ENCODE measurements at regions of chr1 and their contacts with region 1.

Region 1: GRCh38 chr1:160284782-160285344 is at the start of gene PEX19:
- DNase-seq: peak; percentile 90 to 95 (median 92)
- H3K4me3 ChIP-seq: peak within 1 kb of the TSS; percentile 53 to 98
- H3K4me3 Mint-ChIP-seq: peak within 1 kb of the TSS; percentile 98 to 100 (median 99)
- H3K27ac ChIP-seq: peak within 1 kb of the TSS; percentile 81
- H3K27ac Mint-ChIP-seq: peak within 1 kb of the TSS; percentile 71 to 99 (median 98)
- H3K4me1 ChIP-seq: peaks cover 24% of the 10 kb centered on the region
- H3K4me1 Mint-ChIP-seq: peaks cover 20 to 44% (median 28%) of the 10 kb centered on the region in 4 donors
- H3K27me3 ChIP-seq: no peaks in the 10 kb centered on the region
- H3K27me3 Mint-ChIP-seq: no peaks in the 10 kb centered on the region
- total RNA-seq, gene PEX19: 53.5 to 60.6 TPM

Region 2: DNA sequence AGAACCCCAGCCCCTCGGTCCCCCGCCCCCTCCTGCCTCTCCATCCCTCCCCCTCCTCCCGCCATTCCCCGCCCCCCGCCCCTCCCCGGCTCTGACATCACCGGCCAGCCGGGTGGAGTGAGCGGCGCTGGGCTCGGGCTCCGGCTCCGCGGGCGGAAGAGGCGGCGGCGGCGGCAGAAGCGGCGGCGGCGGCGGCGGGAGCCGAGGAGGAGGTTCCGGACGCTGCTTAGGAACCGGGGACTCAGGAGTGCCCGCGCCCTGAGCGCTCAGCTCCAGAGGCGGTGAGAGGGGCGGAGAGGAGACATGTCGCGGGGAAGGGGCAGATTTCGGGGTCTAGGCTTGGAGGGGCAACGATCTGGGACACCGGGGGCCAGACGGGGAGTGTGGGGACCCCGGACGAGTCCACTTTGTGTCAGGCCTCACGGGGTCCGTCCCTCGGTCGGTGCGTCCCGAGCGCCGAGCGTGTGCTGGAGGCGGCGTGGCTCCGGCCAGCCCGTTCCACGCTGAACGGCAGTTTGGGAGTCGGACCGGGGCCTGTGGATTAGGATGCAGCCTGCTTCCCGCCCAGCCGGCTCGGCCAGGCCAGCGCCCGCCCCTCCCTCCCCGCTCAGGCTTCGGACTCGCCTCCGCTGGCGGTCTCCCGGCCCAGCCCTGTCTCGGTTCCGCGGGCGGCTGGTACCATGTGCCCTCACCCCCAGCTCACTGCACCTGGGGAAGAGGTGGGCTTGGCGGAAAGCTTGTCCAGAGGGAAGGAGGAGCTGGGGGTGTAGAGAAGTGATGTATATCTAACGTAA is 79.4 kb before region 1 on chr1 and contains the start of gene PEA15:
- CTCF ChIA-PET with region 1: no interaction called
- POLR2A ChIA-PET with region 1: interaction called, 9 read pairs
- intact Hi-C with region 1: loop called (anchors 5 kb)
- DNase-seq: peak; percentile 59 to 68 (median 62)
- H3K4me3 ChIP-seq: peak within 1 kb of the TSS; percentile 31 to 88
- H3K4me3 Mint-ChIP-seq: peak within 1 kb of the TSS; percentile 88 to 96 (median 92)
- H3K27ac ChIP-seq: peak within 1 kb of the TSS; percentile 77
- H3K27ac Mint-ChIP-seq: peak within 1 kb of the TSS; percentile 88 to 98 (median 94)
- H3K4me1 ChIP-seq: peaks cover 30% of the 10 kb centered on the region
- H3K4me1 Mint-ChIP-seq: peaks cover 29 to 48% (median 40%) of the 10 kb centered on the region in 4 donors
- H3K27me3 ChIP-seq: no peaks in the 10 kb centered on the region
- H3K27me3 Mint-ChIP-seq: no peaks in the 10 kb centered on the region
- total RNA-seq, gene PEA15: 23.1 to 25.1 TPM

Region 3: GRCh38 chr1:160342953-160343869 is 58.3 kb after region 1 on chr1 and contains the starts of genes COPA and NCSTN:
- CTCF ChIA-PET with region 1: no interaction called
- POLR2A ChIA-PET with region 1: interaction called, 4 read pairs
- intact Hi-C with region 1: loop called (anchors 1 kb)
- DNase-seq: peak; percentile 89 to 95 (median 89)
- H3K4me3 ChIP-seq: peak within 1 kb of the TSS; percentile 77 to 96
- H3K4me3 Mint-ChIP-seq: peak within 1 kb of the TSS; percentile 99 to 100 (median 100)
- H3K27ac ChIP-seq: peak within 1 kb of the TSS; percentile 94
- H3K27ac Mint-ChIP-seq: peak within 1 kb of the TSS; percentile 96 to 100 (median 100)
- H3K4me1 ChIP-seq: peaks cover 44% of the 10 kb centered on the region
- H3K4me1 Mint-ChIP-seq: peaks cover 35 to 67% (median 49%) of the 10 kb centered on the region in 4 donors
- H3K27me3 ChIP-seq: no peaks in the 10 kb centered on the region
- H3K27me3 Mint-ChIP-seq: no peaks in the 10 kb centered on the region
- total RNA-seq, gene COPA: 128 to 132 TPM
- total RNA-seq, gene NCSTN: 62.2 to 68.0 TPM

Measured in CD4-positive, alpha-beta memory T cell (primary cell).